ENCODE measurements at regions of chr19 and their contacts with region 1.

Region 1: GRCh38 chr19:3984908-3985642 is at the start of gene EEF2:
- DNase-seq: no peak
- H3K4me3 ChIP-seq: peak within 1 kb of the TSS; percentile 100
- CTCF ChIP-seq: no peak

Region 2: GRCh38 chr19:3931041-3931440 is 54.0 kb before region 1 on chr19:
- CTCF ChIA-PET with region 1: no interaction called
- POLR2A ChIA-PET with region 1: no interaction called
- DNase-seq: no peak
- H3K4me3 ChIP-seq: no peak overlapping the region
- CTCF ChIP-seq: no peak

Region 3: DNA sequence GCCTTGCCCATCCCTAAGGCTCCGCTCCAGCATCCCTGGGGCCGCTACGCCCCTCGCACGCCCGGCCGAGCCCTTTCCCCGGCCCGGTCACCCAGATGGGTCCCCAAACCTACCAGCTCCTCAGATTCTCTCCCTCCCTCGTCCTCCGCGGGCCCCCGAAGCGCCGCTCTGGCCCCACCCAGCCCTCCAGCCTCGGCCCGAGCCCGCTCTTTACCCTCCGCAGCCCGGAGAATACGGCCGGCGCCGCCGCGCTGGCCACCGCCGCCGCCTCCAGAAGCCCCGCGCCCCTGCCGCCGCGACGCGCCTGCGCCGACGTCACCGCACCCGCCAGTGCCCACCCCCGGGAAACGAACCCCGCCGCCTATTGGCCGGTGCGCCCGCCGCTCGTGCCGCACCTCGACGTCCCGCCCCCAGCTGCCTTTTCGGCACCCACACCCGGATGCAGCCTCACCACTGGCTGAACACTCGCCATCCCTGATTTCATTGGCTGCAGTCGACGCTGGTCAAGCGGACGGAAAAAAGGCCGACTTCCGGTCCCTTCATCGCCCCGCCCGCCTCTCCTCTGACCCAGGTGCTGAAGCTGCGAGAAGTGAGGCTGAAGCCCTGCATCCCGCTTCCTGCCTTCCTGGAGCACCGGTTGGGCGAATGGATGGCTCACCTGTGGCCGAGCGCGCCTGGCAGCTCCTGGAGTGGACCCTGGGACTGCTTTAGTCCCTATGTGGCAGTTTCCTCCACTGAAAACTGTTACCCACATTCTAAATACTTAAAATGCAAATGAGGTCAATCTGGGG is 14.1 kb before region 1 on chr19 and contains the start of gene DAPK3:
- CTCF ChIA-PET with region 1: interaction called, 37 read pairs
- POLR2A ChIA-PET with region 1: interaction called, 266 read pairs
- DNase-seq: peak; percentile 85
- H3K4me3 ChIP-seq: peak within 1 kb of the TSS; percentile 97
- CTCF ChIP-seq: no peak

Region 4: GRCh38 chr19:3995627-3996026 is 10.6 kb after region 1 on chr19:
- CTCF ChIA-PET with region 1: interaction called, 12 read pairs
- POLR2A ChIA-PET with region 1: interaction called, 3 read pairs
- DNase-seq: no peak
- H3K4me3 ChIP-seq: no peak overlapping the region
- CTCF ChIP-seq: no peak

Region 5: GRCh38 chr19:4007021-4007835 is 22.2 kb after region 1 on chr19 and contains the start of gene PIAS4:
- CTCF ChIA-PET with region 1: interaction called, 19 read pairs
- POLR2A ChIA-PET with region 1: interaction called, 5 read pairs
- DNase-seq: peak; percentile 12
- H3K4me3 ChIP-seq: peak within 1 kb of the TSS; percentile 90
- CTCF ChIP-seq: no peak

Region 6: GRCh38 chr19:4042731-4043082 is 57.6 kb after region 1 on chr19:
- CTCF ChIA-PET with region 1: no interaction called
- POLR2A ChIA-PET with region 1: no interaction called
- DNase-seq: no peak
- H3K4me3 ChIP-seq: no peak overlapping the region
- CTCF ChIP-seq: no peak

Region 7: GRCh38 chr19:4186087-4186993 is 201.3 kb after region 1 on chr19:
- CTCF ChIA-PET with region 1: interaction called, 16 read pairs
- POLR2A ChIA-PET with region 1: no interaction called
- DNase-seq: no peak
- H3K4me3 ChIP-seq: no peak overlapping the region
- CTCF ChIP-seq: peak; percentile 85

Region 8: GRCh38 chr19:4197625-4198466 is 212.8 kb after region 1 on chr19:
- CTCF ChIA-PET with region 1: interaction called, 61 read pairs
- POLR2A ChIA-PET with region 1: interaction called, 9 read pairs
- DNase-seq: no peak
- H3K4me3 ChIP-seq: no peak overlapping the region
- CTCF ChIP-seq: no peak

Region 9: GRCh38 chr19:4208385-4209094 is 223.5 kb after region 1 on chr19:
- CTCF ChIA-PET with region 1: interaction called, 61 read pairs
- POLR2A ChIA-PET with region 1: interaction called, 3 read pairs
- DNase-seq: no peak
- H3K4me3 ChIP-seq: no peak overlapping the region
- CTCF ChIP-seq: peak; percentile 64

Measured in AG04449 (cell line).